ENCODE measurements at regions of chr3 and their contacts with region 1.

Region 1: GRCh38 chr3:13657660-13658435 is 108.9 kb downstream of the FBLN2 start:
- DNase-seq: peak; percentile 83

Region 2: DNA sequence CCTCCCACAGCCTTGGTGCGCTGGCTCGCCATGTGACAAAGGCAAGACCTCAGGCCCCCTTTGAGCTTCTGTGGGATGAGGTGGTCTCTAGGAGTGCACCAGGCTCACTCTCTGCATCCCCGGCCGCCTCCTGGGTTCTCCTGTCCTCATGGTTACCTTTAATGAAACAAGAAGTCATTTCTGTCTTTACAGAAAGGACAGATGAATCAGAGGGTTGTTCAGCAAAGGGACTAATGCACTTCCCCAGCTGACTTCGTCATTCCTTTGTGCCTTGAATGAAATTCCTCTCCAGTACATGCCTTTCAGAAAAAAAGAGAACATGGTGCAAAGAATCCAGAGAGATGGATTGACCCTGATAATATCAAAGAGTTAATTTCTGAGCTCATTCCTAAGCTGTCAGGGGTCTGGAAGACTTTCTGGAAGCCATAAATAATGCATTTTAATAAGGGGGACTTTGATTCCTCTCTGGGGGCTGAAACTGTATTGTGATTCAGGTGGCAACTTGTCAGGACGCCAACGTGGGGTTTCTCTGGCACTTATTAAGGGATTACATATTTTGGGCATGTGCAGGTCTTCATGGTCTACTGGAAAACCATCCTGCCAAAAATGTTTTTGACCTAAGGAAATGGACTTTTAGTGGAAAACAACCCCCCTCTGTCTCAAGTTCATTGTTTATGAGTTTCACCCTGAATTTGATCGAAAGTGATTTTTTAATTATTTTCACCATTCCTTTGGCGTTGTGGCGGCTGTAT is 13.8 kb after region 1 on chr3:
- CTCF ChIA-PET with region 1: interaction called, 13 read pairs
- POLR2A ChIA-PET with region 1: no interaction called
- DNase-seq: no peak

Region 3: GRCh38 chr3:13718436-13718835 is 60.6 kb after region 1 on chr3:
- CTCF ChIA-PET with region 1: no interaction called
- POLR2A ChIA-PET with region 1: no interaction called
- DNase-seq: peak; percentile 3

Region 4: GRCh38 chr3:13884851-13885703 is 227.2 kb after region 1 on chr3:
- CTCF ChIA-PET with region 1: interaction called, 82 read pairs
- POLR2A ChIA-PET with region 1: no interaction called
- DNase-seq: peak; percentile 66

Measured in HEK293T (cell line).